ENCODE measurements at regions of chr2 and their contacts with region 1.

Region 1: DNA sequence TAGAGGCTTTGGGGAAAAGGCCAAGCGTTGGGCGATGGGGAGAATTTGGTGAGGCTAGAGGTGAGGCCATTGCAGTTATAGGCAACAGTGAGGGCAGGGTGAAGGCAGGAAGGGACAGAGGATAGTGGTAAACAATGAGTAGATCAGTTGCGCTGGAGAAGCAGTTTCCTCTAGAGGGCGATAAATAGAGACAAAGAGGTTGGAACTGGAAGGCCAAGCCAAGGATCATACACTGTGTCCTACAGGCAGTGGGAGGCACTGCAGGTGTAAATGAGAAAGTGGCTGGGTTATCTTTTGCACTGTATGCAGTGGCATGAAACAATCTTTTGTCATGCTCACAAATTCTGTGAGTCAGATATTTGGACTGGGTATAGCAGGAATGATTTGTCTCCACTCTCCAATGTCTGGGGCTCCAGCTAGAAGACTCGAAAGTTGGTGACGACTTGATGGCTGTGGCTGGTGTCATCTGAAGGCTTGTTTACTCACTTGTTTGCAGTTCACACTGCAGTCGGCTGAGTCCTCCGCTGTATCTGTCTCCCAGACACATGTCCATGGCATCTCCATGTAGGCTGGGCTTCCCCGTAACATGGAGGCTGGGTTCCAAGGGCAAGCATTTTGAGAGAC is 82.1 kb downstream of the TNP1 start:
- DNase-seq: no peak

Region 2: DNA sequence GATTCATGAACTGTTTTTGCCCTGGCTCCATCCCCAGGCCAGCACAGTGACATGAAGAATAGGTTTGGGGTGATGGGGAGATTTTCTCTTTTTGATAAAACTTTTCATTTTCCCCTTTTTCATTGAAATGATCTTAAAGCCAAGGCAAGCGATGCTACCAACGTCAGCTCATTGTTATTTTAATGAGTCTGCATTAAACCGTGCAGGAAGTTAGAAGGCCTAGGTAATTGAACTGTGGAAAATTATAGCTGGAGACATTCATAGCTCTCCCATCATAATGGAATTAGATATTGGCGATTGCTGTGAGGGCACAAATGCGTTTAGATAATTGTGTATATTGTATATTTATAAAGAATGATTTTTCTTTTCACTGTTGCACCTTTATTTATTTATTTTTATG is 332.3 kb before region 1 on chr2:
- intact Hi-C with region 1: no loop called
- DNase-seq: no peak

Region 3: DNA sequence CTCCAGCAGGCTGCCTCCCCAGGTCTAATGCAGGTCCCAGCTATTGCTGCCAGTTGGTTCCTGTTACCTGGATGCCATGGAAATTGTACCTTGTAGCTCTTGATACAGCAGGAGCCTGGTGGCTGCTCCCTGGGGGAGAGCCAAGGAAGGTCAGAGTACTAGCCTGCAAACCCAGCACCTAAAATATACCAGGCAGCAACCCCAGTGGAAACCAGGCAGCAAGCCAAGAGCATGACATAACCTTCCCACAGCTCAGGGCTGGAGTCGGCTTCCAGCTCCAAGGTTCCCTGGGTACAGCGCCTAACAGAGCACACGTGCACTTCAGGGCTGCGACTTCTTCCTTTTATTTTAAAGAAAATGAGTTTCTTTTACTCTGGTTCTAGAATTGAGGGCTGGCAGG is 51.8 kb after region 1 on chr2:
- intact Hi-C with region 1: loop called (anchors 2 kb)
- DNase-seq: peak; percentile 92

Region 4: GRCh38 chr2:216888907-216889622 is 111.3 kb after region 1 on chr2:
- intact Hi-C with region 1: loop called (anchors 1 kb)
- DNase-seq: no peak

Region 5: GRCh38 chr2:216936954-216937357 is 159.2 kb after region 1 on chr2:
- intact Hi-C with region 1: loop called (anchors 2 kb)
- DNase-seq: no peak

Region 6: DNA sequence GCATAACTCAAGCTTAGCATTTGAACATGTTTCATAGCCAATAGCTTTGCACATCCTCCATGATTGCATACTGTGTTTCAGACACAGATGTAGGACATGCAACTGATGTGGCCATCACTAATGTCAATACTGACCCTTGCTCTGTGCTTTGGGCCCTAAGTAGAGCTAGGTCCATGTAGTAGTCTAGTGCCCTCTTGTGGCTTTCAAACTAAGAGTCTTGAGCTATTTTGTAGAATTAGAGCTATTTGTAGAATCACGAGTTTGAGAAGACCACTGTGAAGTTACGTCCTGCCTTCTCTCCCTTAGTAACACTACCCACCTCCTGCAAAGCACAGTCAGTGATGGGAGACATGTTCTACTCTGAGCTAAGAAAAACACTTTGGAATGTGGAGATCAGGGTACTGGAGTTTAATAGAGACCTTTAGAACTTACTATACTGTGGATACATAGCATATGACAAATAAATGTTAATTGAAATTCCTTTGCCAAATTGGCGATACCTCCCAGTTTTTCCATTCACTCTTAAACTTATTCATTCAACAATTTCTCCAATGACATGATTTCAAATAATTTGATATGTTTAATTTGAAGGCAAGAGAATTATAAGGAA is 388.6 kb after region 1 on chr2:
- intact Hi-C with region 1: loop called (anchors 10 kb)
- DNase-seq: no peak